Activated CD4-positive, alpha-beta memory T cell treated with anti-CD3 and anti-CD28 coated beads, Interleukin-2, amount 10 ng/mL, durations not matched to agents 7 days and 5 days (primary cell): ENCODE measurements at regions of chr5 and their contacts with region 1.

Region 1: DNA sequence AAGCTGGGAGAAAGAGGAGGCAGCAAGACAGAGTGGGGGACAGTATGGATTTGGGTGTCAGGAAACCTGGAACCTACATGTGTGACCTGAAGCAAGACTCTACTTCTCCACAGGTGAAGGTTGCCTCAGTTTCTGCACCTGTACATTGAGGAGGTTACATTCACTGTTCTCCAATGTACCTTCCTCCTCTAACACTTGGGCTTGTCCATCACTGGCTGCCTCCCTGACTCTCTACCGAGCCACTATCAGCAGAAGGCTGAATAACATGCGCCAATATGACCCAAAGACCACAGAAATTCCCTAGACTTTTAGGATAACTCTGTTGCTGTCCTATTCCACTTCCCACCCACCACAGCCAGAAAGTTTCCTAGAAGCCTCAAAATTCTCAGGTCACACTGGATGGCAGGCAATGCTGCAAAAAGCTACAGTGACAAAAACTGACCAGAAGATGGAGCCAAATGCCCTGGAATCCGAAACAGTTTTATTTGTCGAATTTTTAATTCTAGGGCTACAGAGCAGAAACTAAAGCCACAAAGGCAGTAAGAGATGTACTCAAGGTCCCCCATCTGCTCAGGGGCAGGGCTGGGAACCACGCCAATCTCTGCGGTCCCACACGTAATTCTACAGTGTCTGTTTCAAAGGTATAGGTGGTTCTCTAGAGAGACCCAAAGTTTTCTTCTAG is 64.4 kb downstream of the FAM114A2 start:
- DNase-seq: peak; percentile 35
- H3K4me3 Mint-ChIP-seq: no peak overlapping the region
- H3K27ac Mint-ChIP-seq: no peak overlapping the region
- H3K4me1 Mint-ChIP-seq: peaks cover 3% of the 10 kb centered on the region
- H3K27me3 Mint-ChIP-seq: peaks cover 6% of the 10 kb centered on the region

Region 2: GRCh38 chr5:154087257-154087656 is 113.0 kb after region 1 on chr5:
- CTCF ChIA-PET with region 1: no interaction called
- POLR2A ChIA-PET with region 1: no interaction called
- DNase-seq: no peak
- H3K4me3 Mint-ChIP-seq: no peak overlapping the region
- H3K27ac Mint-ChIP-seq: no peak overlapping the region
- H3K4me1 Mint-ChIP-seq: peaks cover 4% of the 10 kb centered on the region
- H3K27me3 Mint-ChIP-seq: peaks cover 11% of the 10 kb centered on the region

Region 3: GRCh38 chr5:154179846-154180710 is 205.8 kb after region 1 on chr5:
- CTCF ChIA-PET with region 1: interaction called, 14 read pairs
- POLR2A ChIA-PET with region 1: no interaction called
- DNase-seq: peak; percentile 42
- H3K4me3 Mint-ChIP-seq: no peak overlapping the region
- H3K27ac Mint-ChIP-seq: no peak overlapping the region
- H3K4me1 Mint-ChIP-seq: peaks cover 21% of the 10 kb centered on the region
- H3K27me3 Mint-ChIP-seq: peaks cover 16% of the 10 kb centered on the region

Region 4: DNA sequence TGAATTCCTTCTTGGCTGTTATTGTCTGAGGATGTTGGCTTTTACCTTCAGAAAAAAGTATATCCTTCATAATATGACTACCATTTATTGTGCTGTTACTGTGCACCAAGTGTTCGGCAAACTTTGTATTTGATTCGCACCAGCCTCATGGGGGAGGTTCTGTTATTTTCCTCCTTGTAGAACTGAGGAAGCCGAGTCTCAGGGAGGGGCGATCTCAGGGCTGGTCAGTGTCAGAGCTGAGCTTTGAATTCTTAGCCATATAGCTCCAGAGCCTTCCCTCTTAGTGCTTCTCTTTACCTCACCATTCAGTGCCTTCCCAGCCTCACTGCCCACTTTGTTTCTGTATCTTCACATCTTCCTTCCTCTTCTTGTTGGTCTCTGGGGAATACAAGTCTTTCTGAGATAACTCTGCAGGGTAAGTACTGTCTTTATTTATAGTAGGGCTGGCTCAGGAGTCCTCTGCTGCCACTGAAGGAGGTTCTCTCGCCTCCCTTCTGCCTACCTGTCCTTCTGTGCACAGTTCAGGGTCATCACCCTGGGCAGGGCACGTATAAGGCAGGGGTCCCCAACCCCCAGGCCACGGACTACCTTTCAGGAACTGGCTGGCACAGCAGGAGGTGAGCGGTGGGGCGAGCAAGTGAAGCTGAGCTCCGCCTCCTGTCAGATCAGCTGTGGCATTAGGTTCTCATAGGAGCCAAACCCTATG is 264.7 kb after region 1 on chr5:
- CTCF ChIA-PET with region 1: interaction called, 17 read pairs
- POLR2A ChIA-PET with region 1: no interaction called
- DNase-seq: no peak
- H3K4me3 Mint-ChIP-seq: no peak overlapping the region
- H3K27ac Mint-ChIP-seq: no peak overlapping the region
- H3K4me1 Mint-ChIP-seq: peaks cover 26% of the 10 kb centered on the region
- H3K27me3 Mint-ChIP-seq: no peaks in the 10 kb centered on the region

Region 5: DNA sequence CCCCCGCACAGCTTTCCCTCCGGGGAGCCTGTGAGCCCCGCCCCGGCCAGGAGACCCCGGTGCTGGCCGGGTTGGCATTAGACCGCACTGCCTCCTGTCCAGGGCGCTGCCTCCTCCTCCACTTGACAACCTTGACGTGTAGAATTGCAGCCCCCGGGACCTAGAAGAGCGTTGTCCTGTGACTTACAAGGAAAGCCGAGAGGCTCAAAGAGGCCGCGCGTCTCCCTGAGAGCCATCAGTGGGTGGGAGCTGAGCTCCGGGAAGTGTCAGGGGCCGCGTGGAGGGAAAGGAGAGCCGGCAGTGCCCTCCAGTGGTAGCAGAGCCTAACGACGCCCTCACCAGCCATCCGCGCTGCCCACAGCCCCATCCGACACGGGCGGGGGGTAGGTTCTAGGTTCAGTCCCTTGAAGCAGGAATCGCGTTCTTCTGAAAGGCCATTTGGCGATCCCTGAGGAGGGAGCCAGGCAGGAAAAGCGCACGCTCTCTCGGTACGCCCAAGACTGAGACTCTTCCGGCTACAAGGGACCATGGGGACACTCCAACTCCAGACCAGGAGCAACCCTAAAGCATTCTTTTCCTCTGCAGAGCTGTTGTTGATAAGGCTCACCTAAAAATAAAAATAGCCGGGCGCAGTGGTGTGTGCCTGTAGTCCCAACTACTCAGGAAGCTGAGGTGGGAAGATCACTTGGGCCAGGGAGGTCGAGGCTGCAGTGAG is 431.0 kb after region 1 on chr5:
- CTCF ChIA-PET with region 1: interaction called, 27 read pairs
- POLR2A ChIA-PET with region 1: no interaction called
- DNase-seq: peak; percentile 77
- H3K4me3 Mint-ChIP-seq: no peak overlapping the region
- H3K27ac Mint-ChIP-seq: no peak overlapping the region
- H3K4me1 Mint-ChIP-seq: peaks cover 8% of the 10 kb centered on the region
- H3K27me3 Mint-ChIP-seq: no peaks in the 10 kb centered on the region